Stomach (tissue), 19 donors: ENCODE measurements at regions of chr2 and their contacts with region 1.

Region 1: DNA sequence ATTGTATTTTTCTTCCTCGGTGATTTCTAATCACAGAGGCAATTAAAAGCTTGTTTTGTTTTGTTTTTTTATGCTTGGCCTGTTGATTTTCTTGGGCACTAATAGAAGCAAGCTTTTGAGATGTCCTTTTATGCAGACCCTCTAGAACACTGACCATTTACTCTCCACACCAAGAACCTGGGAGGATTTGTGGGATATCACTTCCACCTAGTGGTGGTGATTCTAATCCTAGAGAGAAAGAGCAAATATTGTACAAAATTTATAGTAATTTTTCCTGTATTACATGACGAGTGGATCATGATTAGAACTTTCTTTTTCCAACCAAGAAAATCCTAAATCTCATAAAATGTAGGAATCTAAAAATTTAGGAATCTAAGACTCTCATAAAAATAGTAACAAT is 23.4 kb downstream of the NEMP2 start:
- DNase-seq: peak in 1 of 2 donors; percentile 66
- H3K4me3 ChIP-seq: no peak overlapping the region
- H3K27ac ChIP-seq: no peak overlapping the region
- H3K4me1 ChIP-seq: peaks cover 0 to 19% (median 5%) of the 10 kb centered on the region in 4 donors
- H3K27me3 ChIP-seq: no peaks in the 10 kb centered on the region
- CTCF ChIP-seq: peak in 3 of 7 experiments; percentile 24 to 58 (median 30)
- EP300 ChIP-seq: no peak
- POLR2A ChIP-seq: no peak

Region 2: GRCh38 chr2:190408538-190409271 is 102.4 kb before region 1 on chr2:
- intact Hi-C with region 1: loop called (anchors 10 kb)
- DNase-seq: peak; percentile 70 to 87
- H3K4me3 ChIP-seq: peak overlapping the region; percentile 77 to 87 (median 84)
- H3K27ac ChIP-seq: peak overlapping the region; percentile 92 to 98 (median 95)
- H3K4me1 ChIP-seq: peaks cover 33 to 59% (median 42%) of the 10 kb centered on the region in 4 donors
- H3K27me3 ChIP-seq: no peaks in the 10 kb centered on the region
- CTCF ChIP-seq: no peak
- EP300 ChIP-seq: no peak
- POLR2A ChIP-seq: no peak